ENCODE measurements at regions of chr3 and their contacts with region 1.

Region 1: GRCh38 chr3:156691920-156692319 is 17.5 kb downstream of the TIPARP start:
- DNase-seq: no peak
- H3K4me3 ChIP-seq: no peak overlapping the region
- H3K4me3 Mint-ChIP-seq: no peak overlapping the region
- H3K27ac ChIP-seq: no peak overlapping the region
- H3K27ac Mint-ChIP-seq: no peak overlapping the region
- H3K4me1 ChIP-seq: peaks cover 47% of the 10 kb centered on the region
- H3K4me1 Mint-ChIP-seq: peaks cover 45 to 57% (median 49%) of the 10 kb centered on the region in 4 donors
- H3K27me3 ChIP-seq: no peaks in the 10 kb centered on the region
- H3K27me3 Mint-ChIP-seq: no peaks in the 10 kb centered on the region

Region 2: GRCh38 chr3:156681002-156681401 is 10.9 kb before region 1 on chr3:
- CTCF ChIA-PET with region 1: interaction called, 10 read pairs
- POLR2A ChIA-PET with region 1: interaction called, 127 read pairs
- intact Hi-C with region 1: loop called (anchors 1 kb)
- DNase-seq: no peak
- H3K4me3 ChIP-seq: no peak overlapping the region
- H3K4me3 Mint-ChIP-seq: peak overlapping the region; percentile 65 to 73 (median 68)
- H3K27ac ChIP-seq: no peak overlapping the region
- H3K27ac Mint-ChIP-seq: peak overlapping the region in 6 of 7 donors; percentile 17 to 75 (median 62)
- H3K4me1 ChIP-seq: peaks cover 99% of the 10 kb centered on the region
- H3K4me1 Mint-ChIP-seq: peaks cover 64 to 93% (median 81%) of the 10 kb centered on the region in 4 donors
- H3K27me3 ChIP-seq: no peaks in the 10 kb centered on the region
- H3K27me3 Mint-ChIP-seq: no peaks in the 10 kb centered on the region

Measured in CD4-positive, alpha-beta memory T cell (primary cell).